Gastrocnemius medialis (tissue), 4 donors: ENCODE measurements at regions of chr7 and their contacts with region 1.

Region 1: GRCh38 chr7:101815835-101816493 is 1.5 kb upstream of the CUX1 start:
- DNase-seq: peak; percentile 59 to 71
- ATAC-seq: peak; percentile 73 to 75
- H3K4me3 ChIP-seq: peak overlapping the region; percentile 50 to 81 (median 74)
- H3K27ac ChIP-seq: peak overlapping the region; percentile 74 to 86 (median 86)
- H3K4me1 ChIP-seq: peaks cover 23 to 28% of the 10 kb centered on the region in 2 donors
- H3K27me3 ChIP-seq: no peaks in the 10 kb centered on the region
- CTCF ChIP-seq: peak in 2 of 5 experiments; percentile 5 to 16
- POLR2A ChIP-seq: no peak

Region 2: GRCh38 chr7:101602484-101603241 is 213.3 kb before region 1 on chr7:
- in situ Hi-C with region 1: no loop called
- intact Hi-C with region 1: loop called (anchors 1 kb)
- DNase-seq: peak; percentile 24 to 53
- ATAC-seq: peak; percentile 87 to 91
- H3K4me3 ChIP-seq: no peak overlapping the region
- H3K27ac ChIP-seq: no peak overlapping the region
- H3K4me1 ChIP-seq: peaks cover 0 to 4% of the 10 kb centered on the region in 2 donors
- H3K27me3 ChIP-seq: no peaks in the 10 kb centered on the region
- CTCF ChIP-seq: peak; percentile 65 to 92 (median 84)
- POLR2A ChIP-seq: no peak

Region 3: DNA sequence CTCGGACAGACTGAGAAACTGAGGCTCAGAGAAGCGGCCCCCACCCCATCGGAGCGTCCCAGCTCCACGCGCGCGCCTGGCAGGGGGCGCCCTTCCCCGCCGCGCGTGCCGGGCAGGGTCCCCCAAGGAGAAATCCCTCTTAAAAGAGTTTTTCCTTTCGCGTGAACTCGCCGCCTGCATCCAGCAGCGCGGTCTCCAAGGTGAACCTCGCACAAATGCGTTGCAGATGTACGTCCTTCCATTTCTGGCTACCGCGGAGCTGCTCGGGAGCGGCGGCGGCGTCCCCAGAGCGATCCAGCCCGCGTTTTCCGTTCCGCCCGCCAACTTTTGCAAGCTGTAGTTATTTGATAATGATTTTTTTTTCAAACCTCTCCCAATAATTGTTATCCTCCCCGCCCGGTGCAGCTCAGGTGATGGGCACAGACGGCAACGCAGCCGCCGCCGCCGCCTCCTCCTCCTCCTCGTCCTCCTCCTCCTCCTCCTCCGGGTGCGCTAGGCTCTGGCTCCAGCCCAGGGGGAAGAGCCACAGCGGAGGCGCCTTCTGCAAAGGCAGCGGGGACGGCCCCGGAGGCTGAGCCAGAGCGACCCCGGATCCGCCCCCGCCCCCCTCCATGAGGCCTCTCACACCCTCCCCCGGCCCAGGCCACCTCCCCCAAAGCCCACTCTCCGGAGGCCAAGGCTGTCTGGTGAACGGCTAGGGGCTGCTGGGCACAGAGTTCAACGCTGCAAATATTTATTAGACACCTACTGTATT is 72.5 kb before region 1 on chr7:
- in situ Hi-C with region 1: no loop called
- intact Hi-C with region 1: loop called (anchors 1 kb)
- DNase-seq: no peak
- ATAC-seq: peak; percentile 64 to 75
- H3K4me3 ChIP-seq: peak overlapping the region; percentile 47 to 71 (median 58)
- H3K27ac ChIP-seq: no peak overlapping the region
- H3K4me1 ChIP-seq: peaks cover 0 to 4% of the 10 kb centered on the region in 2 donors
- H3K27me3 ChIP-seq: peaks cover 7 to 20% (median 8%) of the 10 kb centered on the region in 3 donors
- CTCF ChIP-seq: peak; percentile 23 to 68 (median 50)
- POLR2A ChIP-seq: no peak

Region 4: DNA sequence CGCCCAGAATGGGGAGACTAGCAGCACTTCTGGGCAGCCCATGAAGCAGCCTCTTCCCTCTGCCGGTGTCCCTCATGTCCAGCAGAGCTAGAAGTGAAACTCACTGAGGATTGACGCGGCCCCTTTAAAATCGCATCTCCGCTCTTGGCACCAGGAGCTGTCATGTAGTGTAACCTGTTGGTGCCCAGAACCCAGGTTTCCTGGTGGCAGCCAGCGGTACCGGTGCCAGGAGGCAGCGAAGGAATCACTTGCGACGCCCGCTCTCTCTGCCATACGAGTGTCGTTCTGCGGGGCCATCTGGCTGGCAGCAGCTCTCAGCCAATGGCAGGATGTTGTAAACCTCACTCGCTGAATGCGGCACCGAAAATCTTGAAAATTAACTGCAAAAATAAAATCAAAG is 84.1 kb after region 1 on chr7:
- in situ Hi-C with region 1: no loop called
- intact Hi-C with region 1: loop called (anchors 5 kb)
- DNase-seq: peak; percentile 78 to 94
- ATAC-seq: peak; percentile 63 to 86
- H3K4me3 ChIP-seq: peak overlapping the region; percentile 21 to 59 (median 48)
- H3K27ac ChIP-seq: peak overlapping the region; percentile 80 to 91 (median 84)
- H3K4me1 ChIP-seq: peaks cover 72 to 81% of the 10 kb centered on the region in 2 donors
- H3K27me3 ChIP-seq: no peaks in the 10 kb centered on the region
- CTCF ChIP-seq: peak in 4 of 5 experiments; percentile 21 to 46 (median 34)
- POLR2A ChIP-seq: peak; percentile 40 to 51

Region 5: GRCh38 chr7:102236592-102237287 is 420.8 kb after region 1 on chr7:
- in situ Hi-C with region 1: loop called in 2 of 4 experiments (anchors 25 kb)
- intact Hi-C with region 1: loop called (anchors 1 kb)
- DNase-seq: peak; percentile 26 to 52
- ATAC-seq: peak; percentile 71 to 93
- H3K4me3 ChIP-seq: no peak overlapping the region
- H3K27ac ChIP-seq: no peak overlapping the region
- H3K4me1 ChIP-seq: peaks cover 0 to 3% of the 10 kb centered on the region in 2 donors
- H3K27me3 ChIP-seq: no peaks in the 10 kb centered on the region
- CTCF ChIP-seq: peak; percentile 77 to 83 (median 81)
- POLR2A ChIP-seq: no peak